ENCODE measurements at regions of chr3 and their contacts with region 1.

Region 1: GRCh38 chr3:195411836-195412235 is 31.0 kb downstream of the ACAP2 start:
- DNase-seq: no peak
- ATAC-seq: no peak
- H3K4me3 ChIP-seq: no peak overlapping the region
- H3K27ac ChIP-seq: no peak overlapping the region
- H3K4me1 ChIP-seq: no peaks in the 10 kb centered on the region
- H3K27me3 ChIP-seq: no peaks in the 10 kb centered on the region
- CTCF ChIP-seq: no peak
- POLR2A ChIP-seq: no peak

Region 2: GRCh38 chr3:195319060-195319459 is 92.8 kb before region 1 on chr3:
- in situ Hi-C with region 1: loop called in 1 of 4 experiments (anchors 25 kb)
- intact Hi-C with region 1: no loop called
- DNase-seq: no peak
- ATAC-seq: no peak
- H3K4me3 ChIP-seq: no peak overlapping the region
- H3K27ac ChIP-seq: no peak overlapping the region
- H3K4me1 ChIP-seq: no peaks in the 10 kb centered on the region
- H3K27me3 ChIP-seq: no peaks in the 10 kb centered on the region
- CTCF ChIP-seq: no peak
- POLR2A ChIP-seq: no peak